Uterus (tissue), 4 donors: ENCODE measurements at regions of chr9 and their contacts with region 1.

Region 1: DNA sequence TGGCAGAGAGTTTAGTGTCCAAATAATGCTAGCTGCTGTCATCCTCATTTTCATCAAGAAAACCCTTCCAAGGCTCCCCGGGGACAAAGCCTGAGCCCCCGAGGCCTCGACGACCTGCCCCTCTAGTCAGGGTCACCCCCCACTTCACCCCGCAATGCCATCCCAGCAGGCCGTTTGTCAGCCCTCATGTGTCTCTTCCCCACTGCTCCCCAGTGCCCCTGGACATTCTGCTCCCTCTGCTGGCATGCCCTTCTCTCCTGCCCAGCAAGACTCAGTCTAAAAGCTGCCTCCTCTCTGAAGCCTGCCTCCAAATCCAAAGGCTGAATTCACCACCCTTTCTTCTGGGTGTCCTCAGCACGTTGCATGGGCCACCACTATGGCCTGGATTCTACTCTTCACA is 59.3 kb downstream of the PAX5 start:
- DNase-seq: no peak
- H3K4me3 ChIP-seq: no peak overlapping the region
- H3K27ac ChIP-seq: no peak overlapping the region
- H3K4me1 ChIP-seq: no peaks in the 10 kb centered on the region
- H3K27me3 ChIP-seq: no peaks in the 10 kb centered on the region
- CTCF ChIP-seq: no peak
- POLR2A ChIP-seq: no peak

Region 2: DNA sequence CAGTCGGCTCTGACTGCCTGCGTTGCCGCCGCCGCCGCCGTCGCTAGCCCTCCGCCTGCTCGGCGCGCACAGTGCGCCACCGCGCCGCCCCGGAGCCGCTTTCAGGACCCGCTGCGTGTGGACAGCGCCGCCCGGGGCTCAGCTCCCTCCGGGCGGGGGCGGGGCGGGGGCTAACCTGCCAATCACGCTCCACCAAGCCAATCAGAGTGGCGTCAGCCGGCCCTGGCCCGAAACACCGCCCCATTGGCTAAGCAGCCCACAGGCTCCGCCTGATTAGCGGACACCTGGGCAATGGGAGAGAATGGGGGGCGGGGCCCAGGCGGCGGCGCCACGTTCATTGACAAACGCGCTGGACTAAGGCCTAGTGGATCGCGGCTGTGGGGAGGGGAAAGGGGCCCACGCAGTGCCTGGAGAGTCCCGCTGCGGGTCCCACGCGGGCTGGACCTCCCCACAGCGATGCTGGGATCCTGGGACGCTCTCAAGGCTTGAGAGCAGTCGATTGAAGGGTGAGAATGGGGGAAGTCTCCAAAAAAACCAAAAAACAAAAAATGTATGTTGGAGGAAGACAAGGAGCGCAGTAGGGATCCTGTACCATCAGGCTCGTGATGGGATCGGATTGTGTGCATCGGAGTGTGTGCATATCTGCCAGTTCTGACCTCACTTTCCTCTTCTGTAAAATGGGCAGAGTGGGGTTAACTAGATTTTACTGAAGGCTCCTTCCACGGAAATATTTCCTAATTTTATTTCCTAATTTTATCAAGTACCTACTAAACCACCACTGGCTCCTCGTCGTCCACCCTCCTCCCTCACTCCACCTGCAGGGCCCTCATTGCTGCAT is 53.1 kb after region 1 on chr9:
- intact Hi-C with region 1: loop called (anchors 10 kb)
- DNase-seq: peak; percentile 32 to 46
- H3K4me3 ChIP-seq: no peak overlapping the region
- H3K27ac ChIP-seq: no peak overlapping the region
- H3K4me1 ChIP-seq: peaks cover 0 to 12% of the 10 kb centered on the region in 2 donors
- H3K27me3 ChIP-seq: peaks cover 27 to 83% of the 10 kb centered on the region in 2 donors
- CTCF ChIP-seq: no peak
- POLR2A ChIP-seq: no peak

Region 3: GRCh38 chr9:37104183-37104889 is 129.6 kb after region 1 on chr9:
- intact Hi-C with region 1: no loop called
- DNase-seq: no peak
- H3K4me3 ChIP-seq: no peak overlapping the region
- H3K27ac ChIP-seq: no peak overlapping the region
- H3K4me1 ChIP-seq: no peaks in the 10 kb centered on the region
- H3K27me3 ChIP-seq: no peaks in the 10 kb centered on the region
- CTCF ChIP-seq: no peak
- POLR2A ChIP-seq: no peak